Activated CD4-positive, alpha-beta T cell treated with anti-CD3 and anti-CD28 coated beads, Interleukin-2, amount 10 ng/mL, durations not matched to agents 24 days and 14 days (primary cell): ENCODE measurements at regions of chr18 and their contacts with region 1.

Region 1: DNA sequence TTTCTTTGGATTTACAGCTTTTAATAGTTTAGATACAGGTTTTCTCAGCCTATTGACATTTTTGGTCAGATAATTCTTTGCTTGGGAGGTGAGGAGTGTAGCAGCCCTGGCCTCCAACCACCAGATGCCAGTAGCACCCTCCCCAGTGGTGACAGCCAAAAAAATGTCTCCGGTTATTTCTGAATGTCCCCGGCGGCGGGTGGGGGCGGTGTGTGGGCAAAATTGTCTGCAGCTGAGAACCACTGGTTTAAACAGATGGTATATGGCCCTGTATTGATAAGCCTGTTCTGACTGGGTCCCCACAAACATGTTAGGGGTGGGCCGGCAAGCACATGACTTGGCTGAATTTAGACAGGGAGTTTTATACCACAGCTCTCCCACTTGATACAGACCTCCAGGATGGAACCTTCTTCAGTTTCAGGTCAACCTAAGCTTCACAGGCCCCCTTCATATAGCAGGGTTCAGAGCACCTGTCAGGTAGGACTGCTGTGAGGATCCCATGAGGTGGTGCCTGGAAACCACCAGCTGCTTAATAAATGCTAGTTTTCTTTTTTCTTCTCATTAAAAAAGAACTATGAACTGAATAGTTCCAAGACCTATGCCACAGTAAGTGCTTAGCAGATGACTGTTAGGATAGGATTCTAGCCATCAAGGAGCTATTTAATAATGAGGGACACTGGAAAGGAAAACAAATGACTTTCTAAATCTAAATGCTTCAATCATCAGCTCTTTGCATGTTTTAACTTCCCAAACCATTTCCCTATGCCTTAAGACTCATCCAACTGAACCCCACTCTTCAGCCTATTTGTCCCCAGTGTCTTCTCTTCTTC is 18.1 kb downstream of the LPIN2 start:
- DNase-seq: peak; percentile 92
- H3K4me3 Mint-ChIP-seq: peak overlapping the region; percentile 75
- H3K27ac Mint-ChIP-seq: peak overlapping the region; percentile 93
- H3K4me1 Mint-ChIP-seq: peaks cover 76% of the 10 kb centered on the region
- H3K27me3 Mint-ChIP-seq: no peaks in the 10 kb centered on the region

Region 2: GRCh38 chr18:2559249-2559648 is 435.6 kb before region 1 on chr18:
- intact Hi-C with region 1: no loop called
- DNase-seq: no peak
- H3K4me3 Mint-ChIP-seq: no peak overlapping the region
- H3K27ac Mint-ChIP-seq: no peak overlapping the region
- H3K4me1 Mint-ChIP-seq: no peaks in the 10 kb centered on the region
- H3K27me3 Mint-ChIP-seq: no peaks in the 10 kb centered on the region

Region 3: DNA sequence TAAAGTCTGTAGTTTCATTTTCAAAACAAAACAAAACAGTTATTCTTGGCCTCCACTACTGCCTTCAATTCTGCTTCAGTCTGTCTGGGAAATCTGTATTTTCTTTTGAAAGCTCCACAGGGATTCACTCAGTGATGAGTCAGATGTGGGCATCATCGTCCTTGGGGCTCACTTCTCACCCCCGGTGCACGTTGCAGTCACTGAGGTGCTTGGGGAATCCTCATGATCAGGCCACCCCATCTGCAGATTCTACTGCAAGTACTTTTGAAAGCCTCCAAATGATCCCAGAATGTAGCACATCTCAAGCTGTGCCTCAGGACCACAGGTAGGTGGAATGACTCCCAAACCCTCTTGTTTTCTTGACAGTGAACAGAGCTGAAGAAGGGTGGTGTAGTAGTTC is 16.2 kb before region 1 on chr18:
- intact Hi-C with region 1: loop called (anchors 1 kb)
- DNase-seq: peak; percentile 76
- H3K4me3 Mint-ChIP-seq: peak overlapping the region; percentile 81
- H3K27ac Mint-ChIP-seq: peak overlapping the region; percentile 93
- H3K4me1 Mint-ChIP-seq: peaks cover 73% of the 10 kb centered on the region
- H3K27me3 Mint-ChIP-seq: no peaks in the 10 kb centered on the region

Region 4: DNA sequence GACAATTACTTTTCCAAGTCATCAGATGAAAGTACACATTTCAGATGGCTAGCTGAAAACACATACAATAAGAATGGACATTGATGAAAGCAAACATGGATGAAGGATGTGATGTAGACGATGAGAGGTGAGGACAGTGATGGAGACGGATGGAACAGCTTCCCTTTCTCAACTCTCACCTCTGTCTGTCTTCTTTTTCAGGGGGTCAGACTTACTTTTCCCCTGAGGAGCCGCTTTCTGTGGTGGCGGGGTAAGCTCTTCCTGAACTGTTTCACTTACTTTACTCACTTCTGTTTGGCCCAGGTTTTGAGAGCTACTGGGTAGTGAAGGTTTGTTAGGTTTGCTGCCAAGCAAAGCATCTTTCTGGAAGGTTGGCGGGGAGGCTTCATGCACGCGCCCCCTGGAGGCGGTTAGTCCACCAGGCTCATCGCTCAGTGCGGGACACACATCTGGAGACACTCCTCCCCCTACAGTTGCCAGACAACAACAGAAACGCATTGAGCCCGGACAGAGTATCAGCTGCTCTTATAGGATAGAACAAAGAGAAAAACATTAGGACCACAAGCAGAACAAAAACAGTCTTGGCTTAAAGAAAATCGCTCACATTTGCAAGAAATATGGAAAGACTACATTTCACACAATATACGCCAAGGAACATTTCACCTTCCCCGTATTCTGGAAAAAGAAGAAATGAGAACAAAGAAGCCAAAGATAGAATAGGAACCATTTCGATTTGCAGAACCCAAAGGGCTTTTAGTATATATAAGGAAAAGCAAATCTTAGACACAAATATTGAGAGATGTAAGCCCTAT is 134.4 kb after region 1 on chr18:
- intact Hi-C with region 1: loop called (anchors 1 kb)
- DNase-seq: peak; percentile 94
- H3K4me3 Mint-ChIP-seq: peak overlapping the region; percentile 10
- H3K27ac Mint-ChIP-seq: no peak overlapping the region
- H3K4me1 Mint-ChIP-seq: peaks cover 9% of the 10 kb centered on the region
- H3K27me3 Mint-ChIP-seq: no peaks in the 10 kb centered on the region

Region 5: DNA sequence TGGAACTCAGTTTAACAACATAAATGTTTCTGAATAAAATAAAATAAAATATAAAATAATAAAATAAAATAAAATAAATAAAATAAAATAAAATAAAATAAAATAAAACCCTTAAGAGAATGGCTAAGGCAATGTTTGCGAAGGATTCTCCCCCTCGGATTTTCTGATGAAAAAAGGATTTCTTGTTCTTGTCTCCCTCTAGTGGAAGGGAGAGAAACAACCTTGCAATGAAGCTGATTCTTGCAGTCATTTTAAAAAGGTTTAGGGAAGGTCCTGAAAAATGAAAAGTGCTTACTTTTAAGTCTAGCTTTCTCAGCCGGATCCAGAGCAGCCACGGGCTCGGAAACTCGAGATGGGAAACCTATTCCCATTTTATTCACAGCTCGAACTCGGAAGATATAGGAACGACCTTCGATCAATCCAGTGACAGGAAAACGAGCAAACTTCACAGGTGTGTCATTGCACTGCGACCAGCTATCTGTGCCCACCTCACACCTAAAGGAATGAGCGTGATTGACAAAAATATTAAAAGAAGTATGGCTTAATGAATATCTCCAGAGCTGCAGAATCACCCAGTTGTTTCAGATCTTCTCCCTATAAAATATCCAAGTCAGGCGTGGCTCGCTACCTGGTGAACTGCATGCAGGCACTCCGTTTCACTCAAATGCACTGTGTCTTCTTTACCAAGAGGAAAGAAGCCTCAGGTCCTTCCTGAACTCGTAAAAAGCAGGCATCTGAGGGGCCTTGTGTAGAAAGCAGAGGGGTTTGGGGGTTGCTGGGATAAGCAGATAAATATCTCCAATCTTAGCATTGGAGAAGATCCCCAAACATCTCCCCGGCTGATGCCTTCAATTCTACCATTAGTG is 156.8 kb after region 1 on chr18:
- intact Hi-C with region 1: loop called (anchors 1 kb)
- DNase-seq: peak; percentile 64
- H3K4me3 Mint-ChIP-seq: no peak overlapping the region
- H3K27ac Mint-ChIP-seq: no peak overlapping the region
- H3K4me1 Mint-ChIP-seq: peaks cover 6% of the 10 kb centered on the region
- H3K27me3 Mint-ChIP-seq: peaks cover 6% of the 10 kb centered on the region

Region 6: GRCh38 chr18:3816610-3817363 is 822.0 kb after region 1 on chr18:
- intact Hi-C with region 1: no loop called
- DNase-seq: no peak
- H3K4me3 Mint-ChIP-seq: no peak overlapping the region
- H3K27ac Mint-ChIP-seq: no peak overlapping the region
- H3K4me1 Mint-ChIP-seq: no peaks in the 10 kb centered on the region
- H3K27me3 Mint-ChIP-seq: peaks cover 10% of the 10 kb centered on the region